Activated CD4-positive, alpha-beta memory T cell treated with anti-CD3 and anti-CD28 coated beads for 36 hours (primary cell): ENCODE measurements at regions of chr2 and their contacts with region 1.

Region 1: DNA sequence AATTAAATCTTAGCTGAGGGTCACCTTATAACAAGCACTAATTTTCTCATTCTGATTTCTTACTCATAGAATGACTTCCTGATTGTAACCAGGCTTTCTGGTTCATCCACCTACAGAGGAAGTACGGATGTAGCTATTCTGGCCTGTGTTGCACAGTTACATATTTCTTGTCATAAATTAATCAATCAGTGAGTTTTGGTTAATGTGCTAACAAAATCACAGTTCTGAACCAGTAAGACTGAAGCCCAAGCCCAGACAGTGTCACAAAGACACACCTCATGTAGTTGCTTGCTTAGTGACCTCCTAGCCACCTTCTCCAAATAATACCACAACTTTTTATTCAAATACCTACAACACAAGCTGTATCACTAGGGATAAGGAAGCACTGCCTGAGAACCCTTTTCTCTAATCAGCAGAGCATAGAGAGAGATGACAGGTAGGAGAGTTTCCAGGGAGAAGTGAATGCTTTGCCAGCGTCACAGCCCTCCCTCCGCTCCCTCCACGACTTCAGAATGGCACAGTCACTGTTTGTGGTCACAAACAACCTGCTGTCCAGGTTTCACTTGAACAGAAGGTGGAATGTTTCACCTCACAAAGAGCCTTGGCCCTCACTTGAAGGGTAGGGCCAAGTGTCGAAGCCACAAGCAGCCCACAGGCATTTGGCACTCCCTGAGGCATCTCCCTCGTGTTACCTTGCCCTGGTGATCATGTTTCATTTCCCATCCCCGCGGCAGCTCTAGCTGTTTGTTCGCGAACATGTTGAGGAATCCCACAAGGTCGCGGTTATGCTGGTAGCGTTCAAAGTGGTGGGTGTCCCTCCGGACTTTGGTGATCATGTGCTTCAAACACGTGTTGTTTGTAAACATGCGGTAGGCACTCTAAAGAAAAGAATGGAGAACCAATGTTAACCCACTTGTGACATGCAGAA is 120.8 kb upstream of the STK17B start:
- DNase-seq: no peak
- H3K4me3 Mint-ChIP-seq: peak overlapping the region; percentile 10
- H3K27ac Mint-ChIP-seq: no peak overlapping the region
- H3K4me1 Mint-ChIP-seq: peaks cover 49% of the 10 kb centered on the region
- H3K27me3 Mint-ChIP-seq: no peaks in the 10 kb centered on the region

Region 2: DNA sequence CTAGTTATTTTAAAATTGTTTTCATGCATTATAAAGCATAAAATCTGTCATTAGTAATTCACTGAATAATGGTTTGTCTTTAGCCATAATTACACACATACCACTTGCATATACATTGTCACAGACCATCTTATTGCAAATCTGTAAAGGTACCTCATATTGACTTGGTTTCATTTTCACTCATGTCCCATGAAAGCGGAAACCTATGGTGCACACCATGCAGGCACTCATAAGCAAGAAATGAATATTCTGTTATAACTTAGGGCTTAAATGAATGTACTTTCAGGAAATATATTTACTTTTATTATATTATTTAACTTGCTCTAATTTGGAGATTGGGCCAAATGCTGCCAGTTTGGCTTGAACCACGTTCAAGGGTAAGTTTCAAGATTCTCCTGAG is 91.6 kb before region 1 on chr2:
- CTCF ChIA-PET with region 1: no interaction called
- POLR2A ChIA-PET with region 1: no interaction called
- intact Hi-C with region 1: loop called (anchors 1 kb)
- DNase-seq: peak; percentile 61
- H3K4me3 Mint-ChIP-seq: peak overlapping the region; percentile 64
- H3K27ac Mint-ChIP-seq: peak overlapping the region; percentile 82
- H3K4me1 Mint-ChIP-seq: peaks cover 52% of the 10 kb centered on the region
- H3K27me3 Mint-ChIP-seq: no peaks in the 10 kb centered on the region

Region 3: DNA sequence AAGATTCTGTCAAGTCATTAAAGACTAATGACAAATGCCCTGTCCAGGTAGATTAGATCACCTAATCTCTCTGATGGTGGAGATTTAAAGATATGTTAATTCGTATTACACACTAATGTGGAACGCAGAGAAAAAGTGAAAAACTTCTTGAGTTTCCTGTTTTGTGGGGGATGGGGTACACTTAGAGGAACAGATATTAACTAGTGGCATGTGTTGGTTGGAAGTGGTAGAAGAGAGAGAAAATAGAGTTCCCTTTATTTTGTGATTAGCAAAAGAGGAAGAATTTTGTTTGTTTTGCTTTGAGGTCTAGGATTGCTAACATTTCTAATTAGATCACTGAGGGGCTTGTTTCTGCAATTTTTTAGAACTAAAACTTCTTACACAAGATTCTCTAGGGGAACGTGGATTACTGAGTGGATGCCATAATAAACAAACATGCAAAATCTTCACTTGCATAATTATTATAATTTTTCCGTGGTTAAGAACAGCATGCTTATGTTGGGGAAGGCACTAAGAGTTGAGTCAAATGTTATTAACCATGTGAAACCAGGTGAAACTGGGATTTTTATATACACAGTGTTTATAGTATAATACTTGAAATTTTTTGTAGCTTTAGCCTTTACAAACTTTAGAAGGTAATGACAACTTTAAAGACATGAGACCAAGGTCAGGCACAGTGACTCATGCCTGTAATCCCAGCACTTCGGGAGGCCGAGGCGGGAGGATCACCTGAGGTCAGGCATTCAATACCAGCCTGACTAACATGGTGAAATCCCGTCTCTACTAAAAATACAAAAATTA is 23.4 kb before region 1 on chr2:
- CTCF ChIA-PET with region 1: no interaction called
- POLR2A ChIA-PET with region 1: no interaction called
- intact Hi-C with region 1: loop called (anchors 2 kb)
- DNase-seq: peak; percentile 67
- H3K4me3 Mint-ChIP-seq: peak overlapping the region; percentile 25
- H3K27ac Mint-ChIP-seq: peak overlapping the region; percentile 45
- H3K4me1 Mint-ChIP-seq: peaks cover 62% of the 10 kb centered on the region
- H3K27me3 Mint-ChIP-seq: no peaks in the 10 kb centered on the region